A673 (cell line): ENCODE measurements at regions of chr7 and their contacts with region 1.

Region 1: DNA sequence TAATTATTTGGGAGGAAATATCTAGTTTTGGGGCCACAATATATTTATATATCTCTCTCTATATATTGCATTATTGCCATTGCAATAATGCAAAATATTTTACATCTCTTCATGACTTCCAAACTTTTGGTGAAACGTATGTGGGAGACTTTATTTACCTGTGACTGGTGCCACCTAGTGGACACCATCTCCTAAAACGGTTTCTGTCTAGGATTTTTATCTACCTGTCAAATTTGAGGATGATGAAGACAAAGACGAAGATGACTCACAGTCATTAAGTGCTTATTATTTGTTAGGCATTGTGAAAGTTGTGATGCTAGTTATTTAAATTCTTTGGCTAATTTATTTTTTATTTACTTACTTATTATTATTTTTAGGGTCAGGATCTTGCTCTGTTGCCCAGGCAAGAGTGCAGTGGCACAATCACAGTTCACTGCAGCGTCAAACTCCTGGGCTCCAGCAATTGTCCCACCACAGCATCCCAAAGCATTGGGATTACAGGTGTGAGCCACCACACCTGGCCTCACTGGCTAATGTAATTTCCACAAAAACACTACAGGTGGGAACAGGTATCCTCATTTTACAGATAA is 18.7 kb upstream of the CBLL1 start:
- DNase-seq: peak; percentile 59
- H3K4me3 ChIP-seq: no peak overlapping the region
- H3K27ac ChIP-seq: no peak overlapping the region
- H3K4me1 ChIP-seq: no peaks in the 10 kb centered on the region
- H3K27me3 ChIP-seq: no peaks in the 10 kb centered on the region
- CTCF ChIP-seq: peak; percentile 80

Region 2: GRCh38 chr7:106793015-106793975 is 932.0 kb before region 1 on chr7:
- CTCF ChIA-PET with region 1: no interaction called
- POLR2A ChIA-PET with region 1: no interaction called
- intact Hi-C with region 1: loop called (anchors 5 kb)
- DNase-seq: peak; percentile 17
- H3K4me3 ChIP-seq: no peak overlapping the region
- H3K27ac ChIP-seq: no peak overlapping the region
- H3K4me1 ChIP-seq: no peaks in the 10 kb centered on the region
- H3K27me3 ChIP-seq: no peaks in the 10 kb centered on the region
- CTCF ChIP-seq: peak; percentile 75

Region 3: DNA sequence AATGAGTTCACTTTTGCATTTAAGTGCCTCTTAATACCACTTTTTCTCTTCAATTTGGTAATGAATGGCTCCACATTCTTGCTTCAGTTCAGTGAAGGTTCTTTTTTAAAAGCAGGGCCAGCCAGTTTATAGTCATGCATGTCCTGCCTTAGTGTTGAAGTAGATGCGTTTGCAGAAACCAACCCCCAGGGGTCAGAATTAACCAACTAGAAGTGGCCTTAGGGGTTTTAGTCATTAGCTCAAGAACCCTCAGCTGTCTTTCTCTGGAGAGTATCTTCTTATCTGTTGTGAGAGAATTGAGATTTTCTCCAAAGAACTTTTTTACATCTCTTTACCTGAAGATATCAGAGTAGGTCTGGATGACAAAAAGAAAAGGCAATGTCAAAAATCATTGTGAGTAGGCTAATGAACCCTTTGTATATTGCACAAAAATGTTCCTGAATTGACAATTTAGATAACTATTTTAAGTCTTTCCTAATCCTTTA is 778.0 kb before region 1 on chr7:
- CTCF ChIA-PET with region 1: no interaction called
- POLR2A ChIA-PET with region 1: no interaction called
- intact Hi-C with region 1: loop called (anchors 10 kb)
- DNase-seq: peak; percentile 79
- H3K4me3 ChIP-seq: no peak overlapping the region
- H3K27ac ChIP-seq: no peak overlapping the region
- H3K4me1 ChIP-seq: no peaks in the 10 kb centered on the region
- H3K27me3 ChIP-seq: peaks cover 9% of the 10 kb centered on the region
- CTCF ChIP-seq: peak; percentile 72

Region 4: DNA sequence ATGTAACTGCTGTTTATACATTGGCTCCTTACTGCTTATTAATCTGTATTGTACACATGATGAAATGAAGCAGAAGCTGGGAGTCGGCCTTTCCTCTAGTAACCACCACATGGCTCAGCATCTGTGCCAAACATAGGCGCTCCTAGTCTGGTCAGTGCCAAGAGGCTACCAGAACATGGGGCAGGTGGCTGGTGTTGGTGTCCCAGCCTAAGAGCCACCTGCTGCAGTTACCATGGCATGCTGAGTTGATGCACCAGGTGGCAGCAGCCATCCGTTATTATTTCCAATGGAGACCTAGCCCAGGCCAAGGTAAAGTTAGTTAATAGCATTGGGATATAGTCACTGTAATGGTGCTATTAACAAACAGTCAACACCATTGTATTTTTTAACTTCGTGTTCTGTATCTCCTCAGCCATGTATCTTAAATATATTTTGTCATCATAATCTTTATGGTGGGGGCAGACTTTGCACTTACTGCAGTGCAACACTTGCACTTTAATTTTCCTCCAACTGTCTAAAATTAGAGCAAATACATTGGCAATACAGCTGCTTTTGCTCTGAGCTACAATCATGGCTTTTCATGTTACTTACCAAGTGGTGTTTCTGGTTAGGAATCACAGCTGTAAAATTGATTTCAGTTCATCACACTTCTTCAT is 523.3 kb before region 1 on chr7:
- CTCF ChIA-PET with region 1: no interaction called
- POLR2A ChIA-PET with region 1: no interaction called
- intact Hi-C with region 1: loop called (anchors 1 kb)
- DNase-seq: peak; percentile 38
- H3K4me3 ChIP-seq: no peak overlapping the region
- H3K27ac ChIP-seq: no peak overlapping the region
- H3K4me1 ChIP-seq: no peaks in the 10 kb centered on the region
- H3K27me3 ChIP-seq: no peaks in the 10 kb centered on the region
- CTCF ChIP-seq: peak; percentile 52

Region 5: DNA sequence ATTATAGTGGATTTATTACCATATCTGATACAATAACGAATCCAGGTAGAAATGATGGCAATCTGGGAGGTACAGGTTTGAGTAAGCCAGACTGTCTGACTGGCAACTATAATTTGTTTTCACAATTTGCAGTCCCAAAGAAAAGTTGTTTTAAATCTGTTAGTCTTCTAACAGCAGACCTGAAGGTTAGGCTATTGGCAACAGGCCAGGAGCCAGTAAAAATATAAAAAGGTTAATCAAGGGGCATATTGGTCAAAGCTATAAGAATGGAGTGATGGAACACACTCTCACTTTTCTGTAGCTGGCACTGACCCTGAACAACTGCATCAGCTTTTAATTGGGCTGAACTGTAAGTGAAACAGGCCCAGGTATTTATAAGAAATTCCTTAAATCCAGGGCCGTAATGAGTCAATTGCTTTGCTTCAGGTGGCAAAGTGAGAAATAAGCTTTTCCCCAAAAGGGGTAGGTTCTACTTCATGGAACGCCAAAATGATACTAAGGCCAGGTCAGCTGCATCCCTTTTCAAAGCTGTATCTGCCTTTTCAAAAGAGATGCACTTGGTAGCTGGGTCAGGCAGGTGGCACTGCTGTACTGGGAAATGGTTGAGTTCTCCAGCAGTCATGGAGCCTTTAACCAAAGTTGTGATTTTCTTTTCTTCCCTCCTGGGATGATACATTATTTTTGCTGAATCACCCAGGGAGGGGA is 262.4 kb before region 1 on chr7:
- CTCF ChIA-PET with region 1: interaction called, 5 read pairs
- POLR2A ChIA-PET with region 1: no interaction called
- intact Hi-C with region 1: loop called (anchors 1 kb)
- DNase-seq: peak; percentile 71
- H3K4me3 ChIP-seq: no peak overlapping the region
- H3K27ac ChIP-seq: no peak overlapping the region
- H3K4me1 ChIP-seq: no peaks in the 10 kb centered on the region
- H3K27me3 ChIP-seq: no peaks in the 10 kb centered on the region
- CTCF ChIP-seq: peak; percentile 74

Region 6: GRCh38 chr7:107579885-107580715 is 145.1 kb before region 1 on chr7 and contains the start of gene BCAP29:
- CTCF ChIA-PET with region 1: no interaction called
- POLR2A ChIA-PET with region 1: no interaction called
- intact Hi-C with region 1: loop called (anchors 10 kb)
- DNase-seq: peak; percentile 80
- H3K4me3 ChIP-seq: peak within 1 kb of the TSS; percentile 69
- H3K27ac ChIP-seq: peak within 1 kb of the TSS; percentile 84
- H3K4me1 ChIP-seq: peaks cover 9% of the 10 kb centered on the region
- H3K27me3 ChIP-seq: no peaks in the 10 kb centered on the region
- CTCF ChIP-seq: no peak
- total RNA-seq, gene BCAP29: 30.3 and 32.0 TPM in 2 replicates